CD4-positive, alpha-beta memory T cell (primary cell): ENCODE measurements at regions of chr11 and their contacts with region 1.

Region 1: DNA sequence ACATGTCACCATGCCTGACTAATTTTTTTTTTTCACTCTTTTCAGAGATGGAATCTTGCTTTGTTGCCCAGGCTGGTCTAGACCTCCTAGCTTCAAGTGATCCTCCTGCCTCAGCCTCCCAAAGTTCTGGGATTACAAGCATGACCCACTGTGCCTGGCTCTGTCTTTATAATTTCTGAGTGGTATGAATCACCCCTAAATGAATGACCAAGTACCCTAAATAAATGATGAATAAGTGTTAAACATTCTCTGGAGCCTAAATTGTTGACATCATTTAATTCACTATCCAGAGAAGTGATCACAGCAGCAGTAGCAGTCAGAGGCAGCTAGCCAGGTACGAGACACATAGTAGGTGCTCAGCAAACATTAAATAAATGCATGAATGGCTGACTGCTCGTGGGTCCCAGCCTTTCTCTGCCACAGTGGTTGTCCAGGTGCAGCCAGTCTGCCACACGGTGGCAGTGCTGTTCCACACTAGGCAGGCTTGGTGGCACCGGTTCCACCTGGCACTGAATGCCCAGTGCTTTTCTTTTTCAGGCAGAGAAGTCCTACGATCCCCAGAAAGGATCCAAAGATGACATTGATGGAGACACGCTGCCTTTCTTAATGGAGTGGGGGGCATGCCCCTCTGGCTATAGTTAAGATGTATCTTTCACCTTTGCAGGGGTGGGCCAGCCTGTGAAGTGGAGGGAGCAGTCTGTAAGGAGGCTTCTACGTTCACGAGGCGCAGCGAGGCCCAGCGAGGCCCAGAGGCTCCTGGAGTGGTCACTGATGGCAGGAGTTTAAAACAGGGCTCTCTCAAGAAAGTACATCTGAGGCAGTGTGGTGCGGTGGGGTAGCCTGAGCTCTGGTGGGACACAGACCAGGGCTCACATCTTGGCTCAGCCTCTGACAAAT is 8.7 kb upstream of the TTC12 start:
- DNase-seq: peak; percentile 60 to 66 (median 64)
- H3K4me3 ChIP-seq: no peak overlapping the region
- H3K4me3 Mint-ChIP-seq: no peak overlapping the region
- H3K27ac ChIP-seq: no peak overlapping the region
- H3K27ac Mint-ChIP-seq: no peak overlapping the region
- H3K4me1 ChIP-seq: no peaks in the 10 kb centered on the region
- H3K4me1 Mint-ChIP-seq: peaks cover 0 to 5% (median 0%) of the 10 kb centered on the region in 4 donors
- H3K27me3 ChIP-seq: no peaks in the 10 kb centered on the region
- H3K27me3 Mint-ChIP-seq: peaks cover 6 to 7% of the 10 kb centered on the region in 2 donors

Region 2: GRCh38 chr11:113345978-113346377 is 40.3 kb after region 1 on chr11:
- CTCF ChIA-PET with region 1: no interaction called
- POLR2A ChIA-PET with region 1: no interaction called
- intact Hi-C with region 1: no loop called
- DNase-seq: no peak
- H3K4me3 ChIP-seq: no peak overlapping the region
- H3K4me3 Mint-ChIP-seq: no peak overlapping the region
- H3K27ac ChIP-seq: no peak overlapping the region
- H3K27ac Mint-ChIP-seq: no peak overlapping the region
- H3K4me1 ChIP-seq: no peaks in the 10 kb centered on the region
- H3K4me1 Mint-ChIP-seq: no peaks in the 10 kb centered on the region
- H3K27me3 ChIP-seq: no peaks in the 10 kb centered on the region
- H3K27me3 Mint-ChIP-seq: no peaks in the 10 kb centered on the region

Region 3: GRCh38 chr11:113532697-113533424 is 227.2 kb after region 1 on chr11:
- CTCF ChIA-PET with region 1: interaction called, 61 read pairs
- POLR2A ChIA-PET with region 1: no interaction called
- intact Hi-C with region 1: no loop called
- DNase-seq: peak; percentile 19 to 42 (median 34)
- H3K4me3 ChIP-seq: no peak overlapping the region
- H3K4me3 Mint-ChIP-seq: peak overlapping the region in 1 of 8 donors; percentile 32
- H3K27ac ChIP-seq: no peak overlapping the region
- H3K27ac Mint-ChIP-seq: no peak overlapping the region
- H3K4me1 ChIP-seq: no peaks in the 10 kb centered on the region
- H3K4me1 Mint-ChIP-seq: peaks cover 0 to 2% (median 0%) of the 10 kb centered on the region in 4 donors
- H3K27me3 ChIP-seq: no peaks in the 10 kb centered on the region
- H3K27me3 Mint-ChIP-seq: peaks cover 6 to 18% of the 10 kb centered on the region in 2 donors

Region 4: GRCh38 chr11:113730887-113731726 is 425.4 kb after region 1 on chr11:
- CTCF ChIA-PET with region 1: interaction called, 4 read pairs
- POLR2A ChIA-PET with region 1: no interaction called
- intact Hi-C with region 1: loop called (anchors 2 kb)
- DNase-seq: no peak
- H3K4me3 ChIP-seq: no peak overlapping the region
- H3K4me3 Mint-ChIP-seq: no peak overlapping the region
- H3K27ac ChIP-seq: no peak overlapping the region
- H3K27ac Mint-ChIP-seq: no peak overlapping the region
- H3K4me1 ChIP-seq: no peaks in the 10 kb centered on the region
- H3K4me1 Mint-ChIP-seq: no peaks in the 10 kb centered on the region
- H3K27me3 ChIP-seq: no peaks in the 10 kb centered on the region
- H3K27me3 Mint-ChIP-seq: no peaks in the 10 kb centered on the region

Region 5: DNA sequence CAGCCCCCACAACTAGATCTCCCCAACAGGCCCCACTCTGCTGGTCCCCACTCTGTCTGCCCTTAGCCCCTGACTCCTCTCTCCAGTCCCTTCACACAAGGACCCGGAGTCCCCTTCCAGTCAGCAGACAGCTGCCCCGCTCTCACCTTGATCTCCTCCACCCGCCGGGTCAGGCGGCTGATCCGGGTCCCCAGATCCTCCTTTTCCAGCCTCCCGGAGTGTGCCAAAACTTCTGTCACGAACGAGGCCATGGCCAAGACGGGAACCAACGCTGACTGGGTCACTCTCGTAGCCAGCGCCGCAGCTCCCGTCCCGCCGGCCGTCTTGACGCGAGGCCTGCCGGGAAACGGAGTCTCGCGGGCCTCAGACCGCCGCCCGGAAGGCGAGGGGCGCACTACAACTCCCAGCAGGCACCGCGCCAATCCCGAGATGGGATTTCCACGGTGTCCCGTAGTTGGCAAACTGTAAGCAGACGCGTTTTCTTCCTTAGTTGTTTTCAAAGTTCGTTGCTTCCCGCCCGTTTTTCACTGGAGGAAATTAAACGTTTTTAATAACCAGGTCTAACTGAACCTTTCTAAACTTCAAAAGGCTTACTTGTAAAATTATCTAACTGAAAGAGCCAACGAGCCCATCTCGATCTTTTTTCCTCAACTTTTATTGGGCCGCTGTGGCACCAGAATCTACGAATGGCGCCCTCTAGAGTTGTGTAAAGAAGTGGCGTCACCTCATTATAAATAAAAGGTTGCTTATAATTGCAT is 467.9 kb after region 1 on chr11 and contains the start of gene ZW10:
- CTCF ChIA-PET with region 1: no interaction called
- POLR2A ChIA-PET with region 1: no interaction called
- intact Hi-C with region 1: loop called (anchors 1 kb)
- DNase-seq: peak; percentile 90 to 92 (median 92)
- H3K4me3 ChIP-seq: peak within 1 kb of the TSS; percentile 64 to 91
- H3K4me3 Mint-ChIP-seq: peak within 1 kb of the TSS; percentile 89 to 99 (median 98)
- H3K27ac ChIP-seq: peak within 1 kb of the TSS; percentile 62
- H3K27ac Mint-ChIP-seq: peak within 1 kb of the TSS; percentile 88 to 98 (median 96)
- H3K4me1 ChIP-seq: peaks cover 19% of the 10 kb centered on the region
- H3K4me1 Mint-ChIP-seq: peaks cover 12 to 31% (median 22%) of the 10 kb centered on the region in 4 donors
- H3K27me3 ChIP-seq: no peaks in the 10 kb centered on the region
- H3K27me3 Mint-ChIP-seq: peaks cover 0 to 3% of the 10 kb centered on the region in 2 donors
- total RNA-seq, gene ZW10: 8.7 to 9.7 TPM

Region 6: DNA sequence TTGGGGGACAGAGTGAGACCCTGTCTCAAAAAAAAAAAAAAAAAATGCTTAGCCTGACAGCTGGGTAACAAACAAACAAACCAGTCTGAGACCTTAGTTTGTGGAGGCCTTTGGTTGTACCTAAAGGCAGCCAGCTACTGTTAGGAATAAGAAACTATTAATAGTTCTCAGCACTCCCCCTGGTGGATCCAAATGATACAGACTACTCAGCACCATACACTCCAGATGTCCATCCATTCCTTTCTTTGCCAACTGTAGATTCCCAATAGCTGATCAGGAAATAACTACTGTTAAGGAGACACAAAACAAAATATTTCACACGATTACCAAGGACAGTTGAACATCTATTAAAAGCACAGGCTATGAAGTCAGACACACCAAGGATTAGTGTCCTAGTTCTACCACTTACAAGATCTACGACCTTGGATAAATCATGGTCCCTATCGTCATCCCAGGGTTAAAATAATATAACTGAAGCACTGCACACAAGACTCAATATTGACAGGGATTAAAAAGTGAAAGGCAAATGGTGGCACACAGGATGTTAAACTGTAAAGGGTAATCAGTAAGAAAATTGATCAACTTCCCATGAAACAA is 491.1 kb after region 1 on chr11:
- CTCF ChIA-PET with region 1: interaction called, 18 read pairs
- POLR2A ChIA-PET with region 1: no interaction called
- intact Hi-C with region 1: loop called (anchors 1 kb)
- DNase-seq: peak in 4 of 5 donors; percentile 12 to 20 (median 15)
- H3K4me3 ChIP-seq: no peak overlapping the region
- H3K4me3 Mint-ChIP-seq: no peak overlapping the region
- H3K27ac ChIP-seq: no peak overlapping the region
- H3K27ac Mint-ChIP-seq: peak overlapping the region in 1 of 7 donors; percentile 31
- H3K4me1 ChIP-seq: no peaks in the 10 kb centered on the region
- H3K4me1 Mint-ChIP-seq: no peaks in the 10 kb centered on the region
- H3K27me3 ChIP-seq: no peaks in the 10 kb centered on the region
- H3K27me3 Mint-ChIP-seq: no peaks in the 10 kb centered on the region